PC-9 (cell line): ENCODE measurements at regions of chr11 and their contacts with region 1.

Region 1: DNA sequence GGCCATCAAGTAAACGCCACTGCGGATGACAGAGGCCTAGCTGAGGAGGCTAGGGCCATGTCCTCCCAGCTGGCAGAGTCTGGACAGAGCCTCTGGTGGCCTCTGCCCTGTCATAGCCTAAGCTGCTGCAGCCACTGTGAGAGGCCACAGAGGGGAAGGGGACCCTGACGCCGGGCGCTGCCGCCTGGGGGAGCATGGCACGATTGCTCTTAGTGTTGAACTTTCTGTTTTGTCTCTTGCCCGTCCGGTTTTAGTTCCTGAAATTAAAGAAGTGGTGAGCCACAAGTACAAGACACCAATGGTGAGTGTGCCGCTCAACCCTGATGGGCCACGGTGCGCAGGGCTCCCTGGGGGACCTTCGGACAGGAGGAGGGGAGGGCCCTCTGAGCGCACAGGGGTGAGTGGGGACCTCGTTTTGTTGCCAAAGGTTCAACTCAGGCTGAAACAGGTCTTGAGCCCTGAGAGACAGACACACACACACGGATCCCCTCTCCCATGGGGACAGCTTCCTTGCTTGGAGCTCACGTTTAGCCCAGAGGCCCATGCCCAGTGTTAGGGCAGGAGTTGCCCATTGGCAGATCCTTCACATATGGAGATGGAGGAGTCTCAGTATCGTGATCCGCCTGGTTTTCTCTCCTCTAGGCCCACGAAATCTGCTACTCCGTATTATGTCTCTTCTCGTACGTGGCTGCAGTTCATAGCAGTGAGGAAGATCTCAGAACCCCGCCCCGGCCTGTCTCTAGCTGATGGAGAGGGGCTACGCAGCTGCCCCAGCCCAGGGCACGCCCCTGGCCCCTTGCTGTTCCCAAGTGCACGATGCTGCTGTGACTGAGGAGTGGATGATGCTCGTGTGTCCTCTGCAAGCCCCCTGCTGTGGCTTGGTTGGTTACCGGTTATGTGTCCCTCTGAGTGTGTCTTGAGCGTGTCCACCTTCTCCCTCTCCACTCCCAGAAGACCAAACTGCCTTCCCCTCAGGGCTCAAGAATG is 23.8 kb downstream of the MYBPC3 start:
- DNase-seq: no peak
- H3K4me3 ChIP-seq: no peak overlapping the region
- H3K27ac ChIP-seq: no peak overlapping the region
- H3K4me1 ChIP-seq: no peaks in the 10 kb centered on the region
- H3K27me3 ChIP-seq: no peaks in the 10 kb centered on the region
- CTCF ChIP-seq: no peak

Region 2: DNA sequence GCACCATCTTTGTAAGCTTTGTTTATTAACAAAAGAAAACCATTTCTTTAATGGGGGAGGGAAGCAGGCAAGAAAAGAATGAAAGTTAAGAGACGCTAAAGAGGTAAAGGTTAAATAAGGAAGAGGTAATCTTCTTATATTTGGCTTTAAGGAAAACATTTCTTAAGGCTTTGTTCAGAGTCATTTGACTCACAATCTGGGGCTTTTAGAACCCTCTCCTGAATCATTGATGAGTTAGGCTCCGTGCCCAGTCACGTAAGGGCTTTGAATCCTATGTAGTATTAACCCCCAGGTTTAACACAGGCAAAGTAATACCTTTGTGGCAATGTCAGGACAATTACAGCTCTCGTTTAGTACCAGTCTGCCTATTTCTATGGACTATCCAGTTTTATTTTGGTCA is 32.7 kb before region 1 on chr11:
- CTCF ChIA-PET with region 1: interaction called, 10 read pairs
- POLR2A ChIA-PET with region 1: interaction called, 4 read pairs
- intact Hi-C with region 1: no loop called
- DNase-seq: no peak
- H3K4me3 ChIP-seq: no peak overlapping the region
- H3K27ac ChIP-seq: no peak overlapping the region
- H3K4me1 ChIP-seq: no peaks in the 10 kb centered on the region
- H3K27me3 ChIP-seq: no peaks in the 10 kb centered on the region
- CTCF ChIP-seq: no peak